ENCODE measurements at regions of chr7 and their contacts with region 1.

Region 1: DNA sequence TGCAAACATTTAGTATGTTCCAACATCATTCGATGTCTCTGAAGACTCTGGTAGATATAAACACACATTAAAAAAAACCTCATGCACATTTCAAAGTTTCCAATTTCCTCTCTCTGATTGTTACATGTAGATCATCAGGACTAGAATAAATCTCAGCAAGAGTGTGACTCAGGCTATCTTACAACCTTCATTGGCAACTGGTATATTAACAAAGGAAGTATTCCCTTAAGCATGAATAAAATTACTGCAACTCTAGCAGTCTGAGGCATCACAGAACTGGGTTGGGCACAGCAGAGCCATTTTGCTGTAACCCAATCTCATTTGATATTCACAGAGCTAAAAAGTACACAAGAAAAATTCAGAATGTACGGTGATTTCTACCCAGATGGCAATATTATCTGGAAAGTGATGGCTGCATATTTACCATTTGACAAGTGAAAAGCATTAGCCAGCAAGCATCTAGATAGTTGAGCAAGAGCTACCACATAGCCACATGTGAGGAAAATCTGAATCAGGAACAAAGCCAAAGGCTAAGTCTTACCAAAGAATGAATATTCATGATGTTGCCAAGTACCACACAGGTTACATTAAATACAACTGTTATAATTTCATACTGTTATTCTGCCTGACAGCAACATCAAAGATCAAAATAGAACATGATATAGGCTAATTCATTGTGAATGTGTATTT is 232.2 kb downstream of the CRPPA start:
- DNase-seq: no peak
- ATAC-seq: no peak
- H3K4me3 ChIP-seq: no peak overlapping the region
- H3K27ac ChIP-seq: no peak overlapping the region
- H3K4me1 ChIP-seq: no peaks in the 10 kb centered on the region
- H3K27me3 ChIP-seq: no peaks in the 10 kb centered on the region
- CTCF ChIP-seq: no peak

Region 2: GRCh38 chr7:16046041-16046440 is 143.1 kb before region 1 on chr7:
- CTCF ChIA-PET with region 1: no interaction called
- POLR2A ChIA-PET with region 1: no interaction called
- intact Hi-C with region 1: no loop called
- DNase-seq: no peak
- ATAC-seq: no peak
- H3K4me3 ChIP-seq: no peak overlapping the region
- H3K27ac ChIP-seq: no peak overlapping the region
- H3K4me1 ChIP-seq: no peaks in the 10 kb centered on the region
- H3K27me3 ChIP-seq: 0 out of 2 replicates have a peak, but pooled peaks cover 6% of the 10 kb centered on the region
- CTCF ChIP-seq: no peak

Region 3: GRCh38 chr7:16135658-16136057 is 53.5 kb before region 1 on chr7:
- CTCF ChIA-PET with region 1: no interaction called
- POLR2A ChIA-PET with region 1: no interaction called
- intact Hi-C with region 1: loop called (anchors 5 kb)
- DNase-seq: no peak
- ATAC-seq: no peak
- H3K4me3 ChIP-seq: no peak overlapping the region
- H3K27ac ChIP-seq: no peak overlapping the region
- H3K4me1 ChIP-seq: peaks cover 8% of the 10 kb centered on the region
- H3K27me3 ChIP-seq: no peaks in the 10 kb centered on the region
- CTCF ChIP-seq: no peak

Region 4: GRCh38 chr7:16171928-16172327 is 17.2 kb before region 1 on chr7:
- CTCF ChIA-PET with region 1: no interaction called
- POLR2A ChIA-PET with region 1: no interaction called
- intact Hi-C with region 1: no loop called
- DNase-seq: no peak
- ATAC-seq: no peak
- H3K4me3 ChIP-seq: no peak overlapping the region
- H3K27ac ChIP-seq: no peak overlapping the region
- H3K4me1 ChIP-seq: no peaks in the 10 kb centered on the region
- H3K27me3 ChIP-seq: no peaks in the 10 kb centered on the region
- CTCF ChIP-seq: no peak

Region 5: DNA sequence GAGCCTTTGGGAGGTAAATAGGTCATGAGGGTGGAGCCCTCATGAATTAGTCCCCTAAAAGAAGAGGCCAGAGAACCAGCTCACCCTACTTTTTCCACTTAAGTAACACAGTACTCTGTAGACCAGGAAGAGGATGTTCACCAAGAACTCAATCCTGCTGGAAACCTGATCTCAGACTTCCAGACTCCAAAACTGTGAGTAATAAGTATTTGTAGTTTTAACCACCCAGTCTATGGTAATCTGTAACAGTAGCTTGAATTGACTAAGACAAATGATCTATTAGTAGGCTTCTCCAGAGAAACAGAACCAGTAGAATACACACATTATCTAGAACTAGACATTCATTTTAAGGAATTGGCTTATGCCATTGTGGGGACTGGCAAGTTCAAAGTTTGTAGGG is 404.9 kb after region 1 on chr7:
- CTCF ChIA-PET with region 1: no interaction called
- POLR2A ChIA-PET with region 1: no interaction called
- intact Hi-C with region 1: no loop called
- DNase-seq: peak; percentile 46
- ATAC-seq: peak; percentile 84
- H3K4me3 ChIP-seq: no peak overlapping the region
- H3K27ac ChIP-seq: no peak overlapping the region
- H3K4me1 ChIP-seq: peaks cover 4% of the 10 kb centered on the region; the same call in 1 of the 2 replicates
- H3K27me3 ChIP-seq: no peaks in the 10 kb centered on the region
- CTCF ChIP-seq: no peak

Region 6: GRCh38 chr7:16634271-16634738 is 445.1 kb after region 1 on chr7:
- CTCF ChIA-PET with region 1: no interaction called
- POLR2A ChIA-PET with region 1: no interaction called
- intact Hi-C with region 1: no loop called
- DNase-seq: no peak
- ATAC-seq: no peak
- H3K4me3 ChIP-seq: no peak overlapping the region
- H3K27ac ChIP-seq: no peak overlapping the region
- H3K4me1 ChIP-seq: no peaks in the 10 kb centered on the region
- H3K27me3 ChIP-seq: no peaks in the 10 kb centered on the region
- CTCF ChIP-seq: no peak